Posterior vena cava (tissue), 2 donors: ENCODE measurements at regions of chr6 and their contacts with region 1.

Region 1: GRCh38 chr6:32393665-32394420 is 13.1 kb downstream of the BTNL2 start:
- DNase-seq: no peak

Region 2: DNA sequence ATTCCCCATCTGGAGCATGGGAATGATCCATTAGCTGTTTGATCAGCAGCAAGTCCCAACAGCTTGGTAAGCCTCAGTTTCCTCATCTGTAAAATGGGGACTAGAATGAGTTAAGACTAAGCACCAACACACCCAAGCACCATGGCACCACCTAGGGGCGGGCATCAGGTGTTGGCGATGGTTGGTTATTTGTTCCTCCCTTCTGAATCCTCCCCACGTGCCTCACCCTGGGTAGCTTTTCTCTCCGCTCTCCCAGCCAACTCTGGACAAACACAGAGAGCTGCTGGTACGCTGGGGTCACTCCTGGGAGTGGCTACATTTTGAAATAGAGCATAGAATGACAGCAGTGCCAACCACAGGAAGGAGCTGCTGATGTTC is 1213.9 kb after region 1 on chr6:
- intact Hi-C with region 1: loop called in 1 of 2 experiments (anchors 10 kb)
- DNase-seq: no peak